ENCODE measurements at regions of chr10 and their contacts with region 1.

Region 1: GRCh38 chr10:93352638-93353383 is 129.3 kb downstream of the MYOF start:
- DNase-seq: no peak

Region 2: DNA sequence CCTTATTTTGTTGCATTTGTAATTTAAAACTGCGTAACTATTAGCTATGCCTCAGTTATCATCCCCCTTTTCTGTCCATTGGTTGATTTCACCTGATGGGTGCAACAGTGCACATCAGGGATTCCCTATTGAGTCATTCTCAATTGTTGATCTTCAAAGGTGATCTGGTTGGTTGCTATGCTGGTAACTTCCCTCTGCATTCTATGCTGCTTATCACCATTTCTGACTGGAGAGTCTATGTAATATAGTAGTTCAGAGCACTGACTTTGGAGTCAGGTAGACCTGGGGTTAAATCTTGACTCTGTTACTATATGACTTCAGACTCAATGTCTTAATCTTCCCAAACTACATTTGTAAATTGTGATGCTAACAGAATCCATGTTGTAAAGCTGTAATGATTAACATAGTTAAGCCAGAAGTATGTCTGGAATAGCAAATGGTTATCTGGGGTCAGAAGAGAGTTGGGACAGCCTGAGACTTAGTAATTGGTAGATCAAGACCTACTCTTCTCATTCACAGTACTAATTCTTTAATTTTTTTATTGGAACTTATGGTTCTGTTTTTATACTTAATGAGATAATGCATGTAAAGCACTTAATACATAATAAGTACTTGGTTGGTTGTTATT is 466.4 kb before region 1 on chr10:
- intact Hi-C with region 1: loop called (anchors 5 kb)
- DNase-seq: no peak

Region 3: GRCh38 chr10:93006435-93007039 is 346.3 kb before region 1 on chr10:
- intact Hi-C with region 1: loop called (anchors 5 kb)
- DNase-seq: no peak

Region 4: DNA sequence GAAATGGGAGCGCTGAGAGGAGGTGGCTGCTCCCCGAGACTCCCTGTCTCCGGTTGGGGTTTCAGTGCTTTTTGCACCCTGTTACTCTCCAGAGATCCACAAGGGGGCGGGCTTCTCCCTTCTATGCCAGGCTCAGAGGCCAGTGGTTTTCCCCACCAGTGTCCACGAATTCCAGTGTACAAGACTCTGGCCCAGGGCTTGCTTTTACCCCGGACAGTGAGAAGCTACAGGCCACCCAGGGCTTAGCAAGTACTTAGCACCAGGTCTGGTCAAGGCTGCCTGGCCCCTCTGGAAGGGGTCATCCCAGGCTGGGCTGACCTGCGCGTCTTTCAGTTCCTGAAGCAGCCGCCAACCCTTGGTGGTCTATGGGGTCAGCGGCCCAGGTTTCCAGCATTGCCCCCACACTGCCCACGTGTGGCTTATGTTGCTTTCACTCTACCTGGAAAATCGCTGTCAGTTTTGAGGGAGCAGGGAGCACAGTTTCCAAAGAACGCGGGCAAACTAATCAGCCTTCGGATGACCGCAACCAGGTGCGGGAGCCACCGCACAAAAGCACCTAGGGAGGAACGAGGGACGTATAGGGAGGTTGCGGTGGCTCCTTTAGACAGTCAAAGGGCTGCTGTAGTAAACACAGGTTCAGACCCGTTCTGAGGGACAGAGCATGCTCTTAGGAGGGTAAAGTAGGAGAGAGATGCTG is 272.3 kb before region 1 on chr10:
- intact Hi-C with region 1: loop called (anchors 5 kb)
- DNase-seq: peak in 8 of 10 donors; percentile 56 to 94 (median 69)

Region 5: GRCh38 chr10:93309062-93309461 is 43.7 kb before region 1 on chr10:
- intact Hi-C with region 1: no loop called
- DNase-seq: no peak

Region 6: GRCh38 chr10:93445097-93445960 is 92.5 kb after region 1 on chr10:
- intact Hi-C with region 1: no loop called
- DNase-seq: peak in 7 of 10 donors; percentile 33 to 91 (median 52)